MCF 10A (cell line): ENCODE measurements at regions of chr10 and their contacts with region 1.

Region 1: DNA sequence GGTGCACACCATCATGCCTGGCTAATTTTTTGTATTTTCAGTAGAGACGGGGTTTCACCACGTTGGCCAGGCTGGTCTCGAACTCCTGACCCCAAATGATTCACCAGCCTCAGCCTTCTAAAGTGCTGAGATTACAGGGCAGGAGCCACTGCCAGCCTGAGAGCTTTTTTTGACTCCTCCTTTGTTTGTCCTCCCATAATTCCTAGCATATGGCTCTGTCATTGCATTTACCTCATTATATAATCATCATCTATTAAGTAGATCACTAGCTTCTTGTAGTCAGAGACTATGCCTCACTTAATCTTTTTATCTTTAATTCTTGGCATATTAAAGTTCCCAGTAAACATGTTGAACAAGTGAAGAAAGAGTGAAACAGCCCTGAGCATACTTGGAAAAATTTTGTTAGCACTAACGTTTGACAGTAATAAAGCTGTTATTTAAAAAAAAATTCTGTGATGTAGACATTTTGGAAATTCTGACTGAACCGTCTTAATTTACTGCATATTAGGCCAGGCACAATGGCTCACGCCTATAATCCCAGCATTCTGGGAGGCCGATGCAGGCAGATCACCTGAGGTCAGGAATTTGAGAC is 82.0 kb downstream of the CPEB3 start:
- DNase-seq: no peak
- H3K4me3 Mint-ChIP-seq: no peak overlapping the region
- H3K27ac Mint-ChIP-seq: no peak overlapping the region
- H3K4me1 Mint-ChIP-seq: peaks cover 11% of the 10 kb centered on the region
- H3K27me3 Mint-ChIP-seq: no peaks in the 10 kb centered on the region
- CTCF ChIP-seq: no peak

Region 2: GRCh38 chr10:92222603-92223275 is 13.9 kb after region 1 on chr10:
- CTCF ChIA-PET with region 1: interaction called, 7 read pairs
- POLR2A ChIA-PET with region 1: interaction called, 15 read pairs
- intact Hi-C with region 1: no loop called
- DNase-seq: peak; percentile 68
- H3K4me3 Mint-ChIP-seq: peak overlapping the region; percentile 21
- H3K27ac Mint-ChIP-seq: peak overlapping the region; percentile 1
- H3K4me1 Mint-ChIP-seq: peaks cover 20% of the 10 kb centered on the region
- H3K27me3 Mint-ChIP-seq: no peaks in the 10 kb centered on the region
- CTCF ChIP-seq: no peak

Region 3: GRCh38 chr10:92265687-92266258 is 56.9 kb after region 1 on chr10:
- CTCF ChIA-PET with region 1: no interaction called
- POLR2A ChIA-PET with region 1: no interaction called
- intact Hi-C with region 1: no loop called
- DNase-seq: no peak
- H3K4me3 Mint-ChIP-seq: no peak overlapping the region
- H3K27ac Mint-ChIP-seq: no peak overlapping the region
- H3K4me1 Mint-ChIP-seq: no peaks in the 10 kb centered on the region
- H3K27me3 Mint-ChIP-seq: no peaks in the 10 kb centered on the region
- CTCF ChIP-seq: no peak